ENCODE measurements at regions of chr6 and their contacts with region 1.

Region 1: DNA sequence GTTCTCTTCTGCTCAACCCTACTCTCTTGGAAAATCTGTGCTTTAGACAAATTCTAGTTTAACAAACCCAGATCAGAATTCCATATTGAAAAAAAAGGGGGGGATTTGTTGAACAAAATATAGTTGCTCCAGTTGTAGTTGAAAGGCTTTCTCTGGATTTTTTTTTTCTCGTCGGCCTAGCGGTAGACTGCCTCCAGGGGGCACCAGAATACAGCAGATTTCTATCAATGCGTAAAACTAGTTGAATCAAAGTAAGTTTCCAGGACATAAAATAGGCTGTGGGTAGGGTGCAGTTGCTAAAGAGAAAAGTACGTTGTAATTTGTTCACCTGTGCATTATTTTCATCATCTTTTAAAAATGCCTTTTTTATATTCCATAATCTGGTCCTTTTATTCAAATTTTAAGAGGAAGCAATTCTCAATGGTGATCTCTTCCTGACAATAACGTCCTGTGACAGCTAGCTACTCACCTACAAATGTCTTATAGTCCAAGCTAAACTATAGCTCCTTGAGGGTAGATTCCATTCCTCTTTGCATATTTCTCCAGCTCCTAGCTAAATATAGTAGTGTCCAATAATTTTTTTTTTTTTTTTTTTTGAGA is 105.4 kb downstream of the PERP start:
- DNase-seq: peak; percentile 56 to 63
- H3K4me3 ChIP-seq: no peak overlapping the region
- H3K27ac ChIP-seq: no peak overlapping the region
- H3K4me1 ChIP-seq: peaks cover 24% of the 10 kb centered on the region
- H3K27me3 ChIP-seq: no peaks in the 10 kb centered on the region
- CTCF ChIP-seq: peak; percentile 98

Region 2: GRCh38 chr6:137975188-137975940 is 26.5 kb before region 1 on chr6:
- CTCF ChIA-PET with region 1: interaction called, 3 read pairs
- POLR2A ChIA-PET with region 1: interaction called, 4 read pairs
- intact Hi-C with region 1: loop called (anchors 1 kb)
- DNase-seq: no peak
- H3K4me3 ChIP-seq: no peak overlapping the region
- H3K27ac ChIP-seq: no peak overlapping the region
- H3K4me1 ChIP-seq: peaks cover 36% of the 10 kb centered on the region
- H3K27me3 ChIP-seq: no peaks in the 10 kb centered on the region
- CTCF ChIP-seq: peak; percentile 77

Region 3: DNA sequence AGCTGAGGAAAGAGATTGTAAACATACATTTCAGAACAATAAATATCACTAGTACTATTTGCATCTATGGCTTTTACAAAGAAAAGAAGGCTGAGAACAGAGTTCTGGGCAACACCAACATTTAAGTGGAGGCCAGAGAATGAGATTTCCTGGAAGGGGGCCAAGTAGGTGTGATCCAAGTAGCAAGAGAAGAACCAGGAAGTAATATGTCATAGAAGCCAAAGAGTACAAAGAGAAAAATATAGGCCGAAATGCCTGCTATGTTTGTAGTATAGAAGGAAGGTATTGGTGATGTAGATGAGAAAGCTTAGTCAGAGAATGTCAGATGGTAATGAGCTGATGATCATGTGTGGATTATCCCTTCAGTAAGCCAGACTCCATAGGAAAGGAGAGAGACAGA is 10.8 kb after region 1 on chr6:
- CTCF ChIA-PET with region 1: no interaction called
- POLR2A ChIA-PET with region 1: no interaction called
- intact Hi-C with region 1: no loop called
- DNase-seq: no peak
- H3K4me3 ChIP-seq: no peak overlapping the region
- H3K27ac ChIP-seq: no peak overlapping the region
- H3K4me1 ChIP-seq: no peaks in the 10 kb centered on the region
- H3K27me3 ChIP-seq: no peaks in the 10 kb centered on the region
- CTCF ChIP-seq: no peak

Region 4: DNA sequence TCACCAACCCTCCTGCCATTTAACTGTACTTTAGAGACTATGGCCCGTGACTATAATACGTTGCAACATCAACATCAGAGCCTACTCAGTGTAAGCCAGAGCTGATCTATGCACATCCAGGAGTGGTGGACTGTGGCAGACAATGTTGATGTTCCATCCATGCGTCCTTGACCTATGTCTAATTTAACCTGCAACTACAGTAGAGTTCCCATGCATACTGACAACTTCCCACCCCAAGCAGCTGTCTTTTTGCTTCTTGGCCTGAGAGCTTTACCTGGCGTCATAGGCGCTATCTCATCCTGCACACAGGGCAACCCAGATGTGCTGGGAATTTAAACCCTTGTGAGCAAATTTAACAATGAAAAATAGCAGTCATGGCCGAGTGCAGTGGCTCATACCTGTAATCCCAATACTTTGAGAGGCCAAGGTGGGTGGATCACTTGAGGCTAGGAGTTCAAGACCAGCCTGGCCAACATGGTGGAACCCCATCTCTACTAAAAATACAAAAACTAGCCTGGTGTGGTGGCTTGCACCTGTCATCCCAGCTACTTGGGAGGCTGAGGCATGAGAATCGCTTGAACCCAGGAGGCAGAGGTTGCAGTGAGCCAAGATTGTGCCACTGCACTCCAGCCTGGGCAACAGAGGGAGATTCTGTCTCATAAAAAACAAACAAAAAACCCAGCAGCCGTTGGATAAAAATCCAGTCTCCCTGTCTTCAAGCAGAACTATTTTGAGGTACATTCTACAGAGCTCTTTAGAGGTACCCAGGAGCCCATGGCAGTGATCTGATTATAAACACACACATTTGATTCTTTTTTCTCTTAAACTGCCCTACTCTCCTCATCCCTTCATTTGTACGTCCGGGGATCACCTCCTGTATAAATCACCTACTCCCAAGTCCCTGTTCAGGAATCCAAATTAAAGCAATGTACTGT is 83.3 kb after region 1 on chr6:
- CTCF ChIA-PET with region 1: no interaction called
- POLR2A ChIA-PET with region 1: no interaction called
- intact Hi-C with region 1: no loop called
- DNase-seq: peak in 1 of 2 experiments; percentile 3
- H3K4me3 ChIP-seq: no peak overlapping the region
- H3K27ac ChIP-seq: 0 out of 2 replicates have a peak overlapping the region, but pooled peaks have one; percentile 8
- H3K4me1 ChIP-seq: peaks cover 48% of the 10 kb centered on the region
- H3K27me3 ChIP-seq: no peaks in the 10 kb centered on the region
- CTCF ChIP-seq: no peak

Region 5: DNA sequence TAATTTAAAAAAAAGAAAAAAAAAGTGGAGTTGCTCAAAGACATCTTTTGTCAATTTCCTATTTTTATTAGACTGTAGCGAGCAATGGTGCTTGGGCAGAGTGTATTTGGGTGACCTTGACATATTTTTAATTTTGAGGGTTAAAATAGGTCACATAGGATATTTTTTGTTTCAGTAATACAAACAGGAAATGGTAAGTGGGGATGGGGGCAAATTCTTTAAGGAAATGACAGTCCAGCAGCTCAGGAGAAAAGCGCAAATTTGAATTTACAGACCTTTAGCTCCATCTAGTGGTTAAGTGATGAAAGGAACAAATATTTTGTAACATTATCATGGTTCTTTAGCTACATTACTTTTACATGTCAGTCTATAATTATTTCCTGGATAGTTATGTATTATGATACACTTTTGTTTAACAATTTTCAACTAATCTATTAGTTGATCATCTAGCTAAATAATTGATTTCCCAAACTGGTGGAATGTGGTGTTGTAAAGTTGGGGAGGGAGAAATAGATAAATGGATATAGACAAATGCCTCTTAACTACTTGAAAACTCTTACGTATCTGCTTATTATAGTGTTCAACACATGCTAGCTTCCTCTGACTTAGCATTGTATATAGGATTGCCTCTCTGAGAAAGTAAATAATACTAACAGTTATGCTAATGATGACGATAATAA is 1362.6 kb after region 1 on chr6:
- CTCF ChIA-PET with region 1: no interaction called
- POLR2A ChIA-PET with region 1: no interaction called
- intact Hi-C with region 1: loop called (anchors 10 kb)
- DNase-seq: peak in 1 of 2 experiments; percentile 65
- H3K4me3 ChIP-seq: no peak overlapping the region
- H3K27ac ChIP-seq: no peak overlapping the region
- H3K4me1 ChIP-seq: peaks cover 9% of the 10 kb centered on the region
- H3K27me3 ChIP-seq: no peaks in the 10 kb centered on the region
- CTCF ChIP-seq: peak; percentile 97